Lower leg skin (tissue), 4 donors: ENCODE measurements at regions of chr11 and their contacts with region 1.

Region 1: DNA sequence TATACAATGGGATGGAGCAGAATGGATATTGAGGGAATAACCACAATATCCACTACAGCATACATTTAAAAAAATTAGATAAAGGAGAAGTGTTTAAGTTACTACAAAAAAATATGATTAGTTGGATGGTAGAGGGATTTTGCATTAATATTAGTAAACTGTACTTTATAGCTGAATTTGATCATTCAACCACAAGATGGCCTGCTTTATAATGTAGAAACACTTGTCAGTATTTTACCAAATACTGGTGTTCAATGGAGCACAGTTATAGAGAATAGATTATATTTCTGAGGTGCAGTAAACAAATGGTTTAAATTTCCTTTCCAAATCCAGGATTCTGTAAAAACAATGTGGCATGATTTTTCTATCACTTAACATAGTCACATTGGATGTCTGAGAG is 818.8 kb upstream of the CHORDC1 start:
- DNase-seq: no peak
- H3K4me3 ChIP-seq: no peak overlapping the region
- CTCF ChIP-seq: no peak
- POLR2A ChIP-seq: no peak

Region 2: GRCh38 chr11:91730057-91730456 is 688.4 kb after region 1 on chr11:
- intact Hi-C with region 1: loop called (anchors 10 kb)
- DNase-seq: no peak
- H3K4me3 ChIP-seq: no peak overlapping the region
- CTCF ChIP-seq: no peak
- POLR2A ChIP-seq: no peak